HepG2 (cell line): ENCODE measurements at regions of chr20 and their contacts with region 1.

Region 1: DNA sequence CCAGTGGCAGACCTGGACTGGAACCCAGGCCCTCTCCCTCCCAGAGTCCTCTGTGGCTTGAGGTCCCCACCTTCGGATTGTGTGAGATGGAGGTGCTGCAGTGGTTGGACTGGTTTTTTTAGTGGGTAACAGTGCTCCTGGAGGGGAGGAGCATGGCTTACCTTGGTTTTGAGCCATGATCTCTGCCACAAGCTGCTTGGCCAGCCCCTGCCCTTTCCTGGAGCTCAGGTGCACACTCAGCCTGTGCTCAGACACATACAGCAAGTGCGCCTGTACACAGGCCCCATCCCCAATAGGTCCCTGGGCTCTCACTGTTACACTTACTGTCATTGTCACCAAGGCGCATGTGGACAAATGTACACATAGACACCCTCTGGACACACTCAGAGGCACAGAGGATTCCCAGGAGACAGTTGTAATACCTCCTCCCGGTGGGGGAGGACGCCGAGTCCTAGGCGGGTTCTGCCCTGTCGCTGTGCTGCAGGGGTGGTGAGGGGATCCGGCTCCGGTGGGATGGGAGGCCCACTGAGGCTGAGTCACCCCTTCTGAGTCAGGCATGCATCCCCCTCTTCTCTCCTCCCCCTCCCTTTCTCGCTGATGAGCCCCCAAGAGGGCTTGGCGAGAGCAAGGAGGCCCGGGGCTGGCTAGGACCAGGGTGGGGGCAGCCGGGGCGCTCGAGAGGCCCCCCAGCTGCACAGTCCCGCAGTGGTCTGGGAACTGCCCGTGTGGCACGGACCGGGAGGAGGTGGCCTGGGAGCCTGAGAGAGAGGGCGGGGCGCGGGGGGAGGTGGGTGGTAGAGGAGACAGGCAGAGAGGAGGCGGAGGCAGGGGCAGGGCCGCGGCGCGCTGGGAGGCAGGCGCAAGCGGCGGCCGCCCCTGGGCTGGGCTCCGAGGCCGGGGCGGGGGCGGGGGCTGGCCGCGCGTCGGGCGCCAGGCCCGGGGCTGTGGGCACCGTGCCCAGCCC is 522 bp upstream of the EPB41L1 start:
- DNase-seq: peak; percentile 74
- ATAC-seq: peak; percentile 79
- H3K4me3 ChIP-seq: peak overlapping the region; percentile 85 to 92 (median 88)
- H3K27ac ChIP-seq: peak overlapping the region; percentile 28
- H3K4me1 ChIP-seq: peaks cover 89% of the 10 kb centered on the region
- H3K27me3 ChIP-seq: no peaks in the 10 kb centered on the region; a peak in 1 of 5 replicates
- CTCF ChIP-seq: peak; percentile 26; the same call in 1 of the 2 replicates
- EP300 ChIP-seq: no peak; a peak in 1 of 4 replicates
- POLR2A ChIP-seq: peak in 1 of 2 experiments; percentile 67; a peak in 1 of 4 replicates
- RAD21 ChIP-seq: no peak

Region 2: GRCh38 chr20:34209111-34209510 is 1944.9 kb before region 1 on chr20:
- CTCF ChIA-PET with region 1: no interaction called
- POLR2A ChIA-PET with region 1: no interaction called
- in situ Hi-C with region 1: no loop called
- intact Hi-C with region 1: loop called (anchors 5 kb)
- DNase-seq: no peak
- ATAC-seq: peak; percentile 19
- H3K4me3 ChIP-seq: no peak overlapping the region
- H3K27ac ChIP-seq: no peak overlapping the region
- H3K4me1 ChIP-seq: peaks cover 5% of the 10 kb centered on the region
- H3K27me3 ChIP-seq: peaks cover 7 to 32% of the 10 kb centered on the region in 2 experiments; a peak in 4 of 5 replicates
- CTCF ChIP-seq: no peak
- EP300 ChIP-seq: no peak
- POLR2A ChIP-seq: no peak
- RAD21 ChIP-seq: no peak

Region 3: DNA sequence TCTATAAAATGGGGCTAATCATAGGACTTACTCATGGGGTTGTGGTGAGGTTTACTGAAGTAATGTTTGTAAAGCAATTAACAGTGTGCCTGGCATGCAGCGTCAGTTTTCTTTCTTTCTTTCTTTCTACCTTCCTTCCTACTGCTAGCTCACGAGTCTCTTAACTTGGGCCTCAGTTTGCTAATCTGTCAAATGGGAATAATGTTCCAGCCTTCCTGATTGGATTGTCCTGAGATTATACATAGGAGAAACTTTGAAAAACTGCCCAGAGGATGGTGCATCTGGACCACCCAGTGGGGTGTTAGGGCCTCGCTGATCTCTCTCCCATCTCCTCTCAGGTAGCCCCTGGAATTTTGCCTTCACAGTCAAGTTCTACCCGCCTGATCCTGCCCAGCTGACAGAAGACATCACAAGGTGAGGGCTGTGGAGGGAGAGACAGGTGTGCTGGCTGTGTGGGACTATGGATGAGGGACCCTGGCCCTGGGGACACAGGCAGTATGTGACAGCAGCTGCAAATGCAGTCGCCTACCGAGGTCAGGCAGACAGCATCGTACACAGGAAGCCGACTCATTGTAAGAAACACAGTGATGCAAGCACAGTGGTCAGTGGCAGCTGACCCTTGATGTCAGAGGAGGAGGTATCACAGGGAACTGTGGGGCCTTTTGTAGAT is 28.1 kb after region 1 on chr20:
- CTCF ChIA-PET with region 1: no interaction called
- POLR2A ChIA-PET with region 1: interaction called, 11 read pairs
- in situ Hi-C with region 1: no loop called
- intact Hi-C with region 1: loop called (anchors 2 kb)
- DNase-seq: peak; percentile 78
- ATAC-seq: peak; percentile 49
- H3K4me3 ChIP-seq: peak overlapping the region in 1 of 3 experiments; percentile 41; a peak in 2 of 6 replicates
- H3K27ac ChIP-seq: peak overlapping the region; percentile 94
- H3K4me1 ChIP-seq: peaks cover 46% of the 10 kb centered on the region
- H3K27me3 ChIP-seq: no peaks in the 10 kb centered on the region
- CTCF ChIP-seq: 0 out of 2 replicates have a peak, but pooled peaks have one; percentile 1
- EP300 ChIP-seq: peak; percentile 34 to 35; a peak in 2 of 4 replicates
- POLR2A ChIP-seq: no peak; a peak in 1 of 4 replicates
- RAD21 ChIP-seq: no peak

Region 4: GRCh38 chr20:36439040-36439730 is 285.2 kb after region 1 on chr20:
- CTCF ChIA-PET with region 1: no interaction called
- POLR2A ChIA-PET with region 1: no interaction called
- in situ Hi-C with region 1: no loop called
- intact Hi-C with region 1: loop called (anchors 5 kb)
- DNase-seq: peak; percentile 59
- ATAC-seq: peak; percentile 70
- H3K4me3 ChIP-seq: no peak overlapping the region
- H3K27ac ChIP-seq: no peak overlapping the region
- H3K4me1 ChIP-seq: no peaks in the 10 kb centered on the region
- H3K27me3 ChIP-seq: peaks cover 3 to 20% of the 10 kb centered on the region in 2 experiments; a peak in 3 of 5 replicates
- CTCF ChIP-seq: peak; percentile 98
- EP300 ChIP-seq: no peak
- POLR2A ChIP-seq: no peak
- RAD21 ChIP-seq: peak; percentile 95